Right cardiac atrium (tissue), 5 donors: ENCODE measurements at regions of chr19 and their contacts with region 1.

Region 1: GRCh38 chr19:2962045-2962561 is 15.3 kb upstream of the TLE6 start:
- DNase-seq: no peak
- ATAC-seq: peak; percentile 76 to 85
- H3K4me3 ChIP-seq: no peak overlapping the region
- H3K27ac ChIP-seq: no peak overlapping the region
- H3K4me1 ChIP-seq: no peaks in the 10 kb centered on the region
- H3K27me3 ChIP-seq: no peaks in the 10 kb centered on the region

Region 2: DNA sequence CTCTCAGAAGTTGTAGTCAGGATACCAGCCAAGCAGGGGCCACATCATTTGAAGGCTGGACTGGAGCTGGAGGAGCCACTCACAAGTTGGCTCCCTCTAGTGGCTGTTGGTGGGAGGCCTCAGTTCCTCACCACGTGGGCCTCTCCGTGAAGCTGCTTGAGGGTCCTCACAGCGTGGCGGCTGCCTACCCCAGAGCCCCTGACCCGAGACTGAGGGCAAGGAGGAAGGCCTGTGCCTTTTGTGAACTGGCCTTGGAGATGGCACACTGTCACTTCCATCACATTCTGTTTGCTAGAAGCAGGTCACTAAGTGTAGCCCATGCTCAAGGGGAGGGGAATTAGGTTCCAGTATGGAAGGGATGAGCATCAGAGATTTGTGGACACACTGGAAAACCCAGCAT is 146.7 kb after region 1 on chr19:
- intact Hi-C with region 1: loop called in 3 of 4 experiments (anchors 5 to 10 kb)
- DNase-seq: peak; percentile 61 to 87 (median 78)
- ATAC-seq: peak in 1 of 2 donors; percentile 20
- H3K4me3 ChIP-seq: no peak overlapping the region
- H3K27ac ChIP-seq: no peak overlapping the region
- H3K4me1 ChIP-seq: no peaks in the 10 kb centered on the region
- H3K27me3 ChIP-seq: no peaks in the 10 kb centered on the region